ENCODE measurements at regions of chr10 and their contacts with region 1.

Region 1: DNA sequence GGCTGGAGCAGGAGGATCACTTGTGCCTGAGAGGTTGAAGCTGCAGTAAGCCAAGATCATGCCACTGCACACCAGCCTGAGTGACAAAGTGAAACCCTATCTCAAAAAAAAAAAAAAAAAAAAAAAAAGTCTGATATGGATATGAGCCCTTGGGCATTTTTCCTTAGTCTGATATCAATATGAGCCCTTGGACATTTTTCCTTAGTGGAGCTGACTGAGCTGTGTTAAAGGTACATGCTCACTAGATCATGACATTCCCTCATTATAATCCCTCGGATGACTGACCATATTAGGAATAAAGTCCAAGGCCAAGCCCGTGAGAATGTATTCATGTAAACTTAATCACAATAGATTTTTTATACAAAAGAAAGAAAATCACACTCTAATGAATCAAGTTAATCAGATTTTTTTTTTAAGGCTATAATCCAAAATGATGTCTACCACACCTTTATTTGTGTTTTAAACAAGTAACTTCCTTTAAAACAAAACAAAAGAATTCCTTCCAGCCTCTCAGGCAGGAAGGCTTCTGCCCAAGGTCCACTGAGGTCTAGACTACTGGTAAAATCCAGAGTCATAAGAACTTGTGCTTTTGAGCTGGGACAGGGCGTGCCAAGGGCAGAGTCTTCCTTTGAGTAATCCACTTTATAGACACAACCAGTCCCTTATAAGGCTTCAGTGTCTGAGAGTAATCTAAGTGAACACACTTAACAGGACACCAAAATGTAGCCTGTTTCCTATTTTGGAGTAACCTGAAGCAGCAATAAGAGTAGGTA is 5.5 kb downstream of the PPA1 start:
- DNase-seq: no peak
- ATAC-seq: no peak

Region 2: GRCh38 chr10:70052462-70053217 is 175.1 kb before region 1 on chr10 and contains the start of gene MACROH2A2:
- intact Hi-C with region 1: no loop called
- DNase-seq: peak; percentile 71
- ATAC-seq: peak; percentile 96
- total RNA-seq, gene MACROH2A2: 15.2 TPM

Region 3: DNA sequence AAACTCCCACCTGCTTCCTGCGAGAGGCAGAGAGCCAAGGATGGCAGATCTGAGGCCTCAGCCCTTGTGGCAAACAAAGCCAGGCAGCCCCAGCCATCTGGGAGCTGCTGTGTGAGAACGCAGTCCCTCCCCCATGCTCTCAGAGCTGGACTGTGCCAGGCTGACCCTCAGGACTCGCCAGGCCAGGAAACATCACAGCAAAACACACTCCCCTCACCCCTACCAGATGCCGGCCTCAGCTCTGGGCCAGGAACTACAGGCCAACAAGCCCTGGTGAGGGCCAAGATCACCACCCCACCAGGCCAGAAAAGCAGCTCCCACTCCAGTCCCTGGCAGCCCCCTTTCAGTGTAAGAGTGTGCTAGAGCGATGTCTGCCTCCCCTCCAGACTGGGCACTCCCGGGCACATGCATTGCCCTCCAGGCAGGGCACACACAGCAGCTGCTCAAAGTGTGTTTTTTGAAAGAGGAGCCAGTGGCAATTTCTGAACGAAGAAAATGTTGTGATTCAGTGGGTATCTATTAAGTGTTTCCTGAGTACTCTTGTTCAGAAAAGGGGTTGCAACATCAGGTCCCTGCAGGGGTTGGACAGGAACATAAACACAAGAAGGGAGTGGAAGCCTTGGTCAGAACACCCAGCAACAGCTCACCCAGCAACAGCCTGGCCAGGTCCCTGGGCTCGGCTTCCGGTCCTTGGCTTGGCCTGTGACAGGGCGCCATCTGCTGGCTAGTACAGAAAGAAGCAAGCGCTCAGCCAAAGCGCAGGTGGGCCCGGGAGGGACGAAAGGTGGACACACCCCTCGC is 136.4 kb after region 1 on chr10:
- intact Hi-C with region 1: loop called (anchors 5 kb)
- DNase-seq: peak; percentile 92
- ATAC-seq: peak; percentile 98

Region 4: GRCh38 chr10:70513848-70514309 is 286.1 kb after region 1 on chr10:
- intact Hi-C with region 1: no loop called
- DNase-seq: no peak
- ATAC-seq: no peak

Measured in left ventricle myocardium superior (tissue), 1 donor.